HEK293 (cell line): ENCODE measurements at regions of chr9 and their contacts with region 1.

Region 1: DNA sequence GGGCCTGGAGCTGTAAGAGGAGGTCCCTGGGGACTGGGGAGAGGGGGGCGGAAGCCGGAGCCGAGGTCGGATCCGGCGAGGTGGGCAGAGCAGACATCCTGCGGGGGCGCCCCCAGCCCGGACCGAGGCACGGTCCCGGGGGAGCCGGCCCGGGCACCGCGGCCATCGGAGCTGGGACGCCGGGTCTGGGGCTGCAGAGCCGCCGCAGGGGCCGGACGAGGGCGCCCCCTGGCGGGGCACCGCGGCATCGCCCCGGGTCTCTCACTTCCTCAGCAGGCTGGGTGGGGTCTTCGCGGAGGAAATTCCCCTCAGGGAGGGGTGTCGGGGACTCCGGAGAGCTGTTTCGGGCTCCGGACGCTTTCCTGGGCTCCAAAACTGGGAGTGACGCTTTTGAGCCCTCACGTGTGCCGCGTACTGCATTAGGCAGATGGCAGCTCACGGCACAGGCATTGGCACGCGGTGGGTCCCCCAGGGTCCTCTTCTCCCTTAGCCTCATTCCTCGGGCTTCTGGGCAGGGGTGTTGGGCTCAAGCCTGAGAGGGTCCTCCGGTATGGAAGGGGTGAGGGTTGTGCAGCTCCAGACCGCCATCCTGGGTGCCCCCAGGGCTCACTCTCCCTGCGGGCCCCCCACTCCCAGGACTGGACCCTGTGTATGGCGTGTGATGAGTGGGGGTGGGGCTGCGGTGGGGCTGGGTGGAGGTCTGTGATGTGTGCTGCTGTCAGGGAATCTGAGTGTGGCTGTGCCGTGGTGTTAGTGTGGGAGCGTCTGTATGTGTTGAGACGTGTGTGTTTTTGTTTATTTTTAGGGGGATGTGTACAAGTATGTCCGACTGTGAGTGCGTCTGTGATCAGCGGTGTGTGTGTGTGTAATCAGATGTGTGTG is 29.6 kb downstream of the LHX2 start:
- H3K4me3 ChIP-seq: peak overlapping the region; percentile 38
- H3K27ac ChIP-seq: peak overlapping the region; percentile 38; the same call in 1 of the 2 replicates
- H3K4me1 ChIP-seq: peaks cover 2% of the 10 kb centered on the region; the same call in 1 of the 2 replicates
- CTCF ChIP-seq: 0 out of 2 replicates have a peak, but pooled peaks have one; percentile 40

Region 2: DNA sequence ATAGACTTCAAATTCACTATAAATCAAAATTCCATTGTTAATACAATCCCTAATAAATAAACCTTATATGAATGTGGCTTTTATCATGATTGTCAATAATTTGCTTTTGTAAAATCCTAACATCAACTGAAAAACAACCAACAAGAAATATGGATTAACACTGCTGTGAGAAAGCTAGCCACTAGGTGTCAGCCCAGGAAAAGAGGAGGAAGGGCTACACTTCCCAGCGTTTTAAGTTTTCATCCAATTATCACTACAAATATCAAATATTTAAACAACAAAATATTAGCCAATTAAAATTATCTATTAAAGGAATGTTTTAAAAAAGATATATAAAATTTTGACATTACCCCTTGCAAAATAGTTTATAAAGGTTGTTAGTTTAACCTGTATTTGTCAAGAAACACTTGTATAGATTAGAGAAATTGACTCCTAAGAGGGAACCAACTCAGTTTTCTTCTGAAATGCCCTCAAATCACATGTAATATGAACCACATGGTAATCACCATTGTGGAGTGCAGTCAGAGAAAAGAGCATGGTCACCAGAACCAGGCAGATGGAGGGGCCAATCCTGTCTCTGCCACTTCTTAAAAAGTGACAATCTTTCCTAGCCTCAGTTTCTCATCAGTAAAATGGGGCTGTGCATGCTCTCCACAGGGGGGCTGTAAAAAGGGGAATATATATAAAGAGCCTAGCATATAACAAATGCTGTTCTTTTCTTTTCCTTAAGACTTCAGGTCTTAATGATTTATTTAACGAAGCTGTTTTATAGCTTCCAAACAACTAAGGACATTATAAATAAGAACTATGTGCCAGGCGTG is 497.0 kb before region 1 on chr9:
- CTCF ChIA-PET with region 1: interaction called, 64 read pairs
- POLR2A ChIA-PET with region 1: no interaction called
- H3K4me3 ChIP-seq: no peak overlapping the region
- H3K27ac ChIP-seq: no peak overlapping the region
- H3K4me1 ChIP-seq: peaks cover 3% of the 10 kb centered on the region; the same call in 1 of the 2 replicates
- CTCF ChIP-seq: no peak

Region 3: DNA sequence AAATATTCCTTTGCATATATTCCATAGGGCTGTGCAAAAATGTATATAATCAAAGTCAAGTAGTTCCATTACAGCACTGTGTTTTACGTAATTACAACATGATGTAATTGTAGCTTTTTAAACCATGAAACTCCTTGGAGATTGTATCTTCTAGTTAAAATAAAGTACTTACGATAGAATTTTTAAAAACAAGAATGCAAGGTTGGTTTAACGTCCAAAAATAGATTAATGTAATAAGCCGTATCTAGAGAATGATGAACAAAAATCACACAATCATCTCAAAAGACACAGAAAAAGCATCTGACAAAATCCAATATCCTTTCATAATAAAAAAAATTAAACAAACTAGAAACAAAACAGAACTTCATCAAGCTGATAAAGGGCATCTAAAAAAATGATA is 197.5 kb before region 1 on chr9:
- CTCF ChIA-PET with region 1: no interaction called
- POLR2A ChIA-PET with region 1: no interaction called
- H3K4me3 ChIP-seq: no peak overlapping the region
- H3K27ac ChIP-seq: no peak overlapping the region
- H3K4me1 ChIP-seq: 0 out of 2 replicates have a peak, but pooled peaks cover 3% of the 10 kb centered on the region
- CTCF ChIP-seq: no peak

Region 4: DNA sequence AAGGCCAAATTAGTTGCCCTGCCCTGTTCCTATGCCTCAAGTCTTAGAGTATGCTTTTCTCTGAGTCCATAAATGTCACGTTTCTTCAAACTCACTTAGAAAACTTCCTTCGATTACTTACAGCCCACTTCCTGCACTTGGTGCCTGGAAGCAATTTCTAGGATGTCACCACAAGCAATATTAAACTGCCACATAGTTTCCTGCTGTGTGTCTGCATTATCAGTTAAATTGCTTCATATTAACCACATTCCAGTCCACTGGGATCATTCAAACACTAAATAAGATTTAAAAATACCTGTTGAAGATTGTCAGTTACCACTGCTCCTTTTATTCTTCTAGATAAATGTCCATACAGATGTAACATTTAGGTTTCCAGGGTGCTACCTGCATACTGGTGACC is 115.4 kb before region 1 on chr9:
- CTCF ChIA-PET with region 1: interaction called, 10 read pairs
- POLR2A ChIA-PET with region 1: no interaction called
- H3K4me3 ChIP-seq: no peak overlapping the region
- H3K27ac ChIP-seq: no peak overlapping the region
- H3K4me1 ChIP-seq: peaks cover 6% of the 10 kb centered on the region
- CTCF ChIP-seq: no peak

Region 5: GRCh38 chr9:123960366-123960765 is 80.8 kb before region 1 on chr9:
- CTCF ChIA-PET with region 1: interaction called, 30 read pairs
- POLR2A ChIA-PET with region 1: no interaction called
- H3K4me3 ChIP-seq: no peak overlapping the region
- H3K27ac ChIP-seq: no peak overlapping the region
- H3K4me1 ChIP-seq: no peaks in the 10 kb centered on the region
- CTCF ChIP-seq: no peak

Region 6: DNA sequence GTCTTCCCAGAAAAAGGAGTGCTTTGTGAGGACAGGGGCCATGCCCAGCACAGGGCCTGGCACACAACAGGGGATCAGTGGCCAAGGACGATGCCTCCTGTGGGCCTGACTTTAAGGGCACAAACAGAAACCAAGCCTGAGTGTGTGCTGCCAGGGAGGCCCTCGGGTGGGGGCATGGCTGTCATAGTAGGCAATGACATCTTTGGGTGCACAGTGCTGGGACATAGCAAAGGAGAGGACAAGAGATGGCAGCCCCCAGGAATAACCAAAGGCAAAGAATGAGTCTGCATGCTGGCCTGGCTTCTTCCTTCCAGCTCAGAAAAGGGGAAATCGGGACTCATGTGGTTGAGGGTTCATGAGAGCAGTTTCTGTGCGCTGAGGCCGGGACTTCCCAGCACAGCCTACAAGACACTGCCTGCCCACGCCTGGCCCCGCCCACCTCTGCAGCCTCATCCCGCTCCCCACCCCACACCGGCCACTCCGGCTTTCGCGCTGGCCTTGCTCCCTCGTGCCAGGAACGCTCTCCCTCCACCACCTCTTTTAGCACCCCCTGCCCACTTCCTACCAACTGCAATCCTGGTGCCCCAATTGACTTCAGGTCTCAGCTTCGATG is 43.4 kb before region 1 on chr9:
- CTCF ChIA-PET with region 1: interaction called, 11 read pairs
- POLR2A ChIA-PET with region 1: no interaction called
- H3K4me3 ChIP-seq: no peak overlapping the region
- H3K27ac ChIP-seq: no peak overlapping the region
- H3K4me1 ChIP-seq: peaks cover 11% of the 10 kb centered on the region
- CTCF ChIP-seq: no peak

Region 7: DNA sequence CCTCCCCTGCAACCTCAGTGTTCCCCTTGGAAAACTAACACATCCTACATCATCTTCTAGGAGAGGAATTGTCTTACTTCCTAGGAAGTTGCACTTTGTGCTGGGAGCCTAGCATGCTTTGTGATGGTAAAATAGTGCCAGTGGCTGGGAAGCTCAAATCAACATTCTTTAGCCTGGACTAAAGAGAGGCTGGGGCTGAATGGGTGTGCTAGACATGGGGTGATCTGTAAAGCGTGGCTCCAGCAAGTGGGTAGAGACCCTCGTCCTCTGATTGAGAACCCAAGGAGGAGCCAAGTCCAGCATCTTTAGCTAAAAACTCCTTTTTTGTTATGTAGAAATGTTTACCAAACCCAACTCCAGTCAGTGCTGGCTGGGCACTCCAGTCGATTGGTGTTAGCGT is 35.8 kb before region 1 on chr9:
- CTCF ChIA-PET with region 1: interaction called, 27 read pairs
- POLR2A ChIA-PET with region 1: interaction called, 5 read pairs
- H3K4me3 ChIP-seq: no peak overlapping the region
- H3K27ac ChIP-seq: peak overlapping the region; percentile 3; the same call in 1 of the 2 replicates
- H3K4me1 ChIP-seq: peaks cover 55% of the 10 kb centered on the region
- CTCF ChIP-seq: no peak

Region 8: GRCh38 chr9:124030969-124031451 is 10.2 kb before region 1 on chr9:
- CTCF ChIA-PET with region 1: interaction called, 13 read pairs
- POLR2A ChIA-PET with region 1: no interaction called
- H3K4me3 ChIP-seq: no peak overlapping the region
- H3K27ac ChIP-seq: no peak overlapping the region
- H3K4me1 ChIP-seq: no peaks in the 10 kb centered on the region
- CTCF ChIP-seq: no peak